Transverse colon (tissue), 4 donors: ENCODE measurements at regions of chr1 and their contacts with region 1.

Region 1: GRCh38 chr1:204363335-204364124 is 3.8 kb upstream of the PLEKHA6 start:
- DNase-seq: peak; percentile 75
- H3K4me3 ChIP-seq: peak overlapping the region; percentile 20 to 49 (median 30)
- H3K27ac ChIP-seq: peak overlapping the region; percentile 52 to 74 (median 66)
- H3K4me1 ChIP-seq: peaks cover 6 to 22% (median 14%) of the 10 kb centered on the region in 4 donors
- H3K27me3 ChIP-seq: no peaks in the 10 kb centered on the region
- CTCF ChIP-seq: peak; percentile 97 to 100 (median 98)
- EP300 ChIP-seq: no peak
- POLR2A ChIP-seq: peak; percentile 11

Region 2: GRCh38 chr1:203861379-203862184 is 501.9 kb before region 1 on chr1 and contains the start of gene SNRPE:
- in situ Hi-C with region 1: loop called in 3 of 4 experiments (anchors 25 kb)
- intact Hi-C with region 1: no loop called
- DNase-seq: peak; percentile 97
- H3K4me3 ChIP-seq: peak within 1 kb of the TSS; percentile 71 to 97 (median 80)
- H3K27ac ChIP-seq: peak within 1 kb of the TSS; percentile 72 to 89 (median 80)
- H3K4me1 ChIP-seq: peaks cover 13 to 27% (median 17%) of the 10 kb centered on the region in 4 donors
- H3K27me3 ChIP-seq: no peaks in the 10 kb centered on the region
- CTCF ChIP-seq: peak; percentile 85 to 98 (median 93)
- EP300 ChIP-seq: no peak
- POLR2A ChIP-seq: peak; percentile 52
- total RNA-seq, gene SNRPE: 3.0 to 30.2 (median 24.0) TPM in 3 of 4 donors, not detected in the other

Region 3: DNA sequence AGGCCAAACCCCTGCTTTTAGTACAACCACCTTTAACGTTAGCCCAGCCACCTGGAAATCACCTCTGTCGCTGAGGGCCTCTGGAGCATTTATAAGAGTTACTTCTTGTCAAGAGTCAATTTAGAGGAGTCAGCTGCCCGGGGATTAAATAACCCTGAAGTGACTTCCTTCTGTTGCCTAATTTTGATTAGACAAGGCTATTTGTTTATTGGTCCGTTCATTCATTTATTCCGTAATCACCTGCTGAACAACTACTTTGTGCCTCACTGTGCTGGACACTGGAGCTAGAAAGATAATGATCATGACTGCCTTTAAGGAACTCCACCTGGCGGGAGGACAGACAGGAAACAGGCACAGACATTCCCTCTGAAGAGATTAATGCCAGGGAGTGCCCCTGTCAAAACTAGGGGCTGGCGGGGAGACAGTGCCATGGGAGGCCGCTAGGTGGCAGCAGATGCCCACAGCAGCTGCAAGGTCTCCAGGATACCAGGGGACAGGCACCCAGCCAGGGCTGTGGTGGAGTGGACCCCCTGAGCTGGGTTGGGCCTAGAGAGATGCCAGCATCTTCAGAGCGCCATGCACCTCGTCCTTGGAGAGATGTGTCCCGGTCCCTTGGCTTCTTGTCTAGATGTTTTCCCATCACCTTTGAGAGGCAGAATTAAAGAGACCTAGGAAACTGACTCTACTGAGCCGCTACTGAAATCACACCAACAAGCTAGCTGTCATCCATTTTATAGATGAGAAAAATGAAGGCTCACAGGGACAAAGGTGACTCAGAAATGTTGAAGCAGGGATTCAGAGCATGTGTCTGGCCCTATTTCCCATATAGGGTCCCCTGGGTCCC is 201.1 kb before region 1 on chr1:
- in situ Hi-C with region 1: loop called (anchors 5 to 10 kb)
- intact Hi-C with region 1: loop called (anchors 2 kb)
- DNase-seq: peak; percentile 88
- H3K4me3 ChIP-seq: no peak overlapping the region
- H3K27ac ChIP-seq: no peak overlapping the region
- H3K4me1 ChIP-seq: peaks cover 0 to 5% (median 0%) of the 10 kb centered on the region in 4 donors
- H3K27me3 ChIP-seq: peaks cover 11% of the 10 kb centered on the region
- CTCF ChIP-seq: peak; percentile 98 to 100 (median 98)
- EP300 ChIP-seq: no peak
- POLR2A ChIP-seq: no peak

Region 4: DNA sequence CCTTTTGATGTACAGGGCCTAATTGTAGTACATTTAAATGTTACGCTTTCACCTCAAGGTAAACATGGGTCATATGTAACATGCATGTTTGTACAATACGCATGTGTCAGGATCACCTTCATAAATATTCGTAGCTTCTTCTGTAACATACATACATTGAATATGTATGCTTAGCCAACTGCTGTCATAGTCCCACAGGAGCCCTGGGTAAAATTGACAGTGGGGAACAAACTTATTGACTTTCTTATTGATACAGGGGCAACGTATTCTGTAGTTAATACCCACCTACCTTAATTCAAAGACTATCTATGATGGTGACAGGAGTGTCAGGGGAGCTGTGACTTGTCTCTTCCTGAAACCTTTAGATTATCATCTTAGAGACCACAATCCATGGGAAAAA is 193.7 kb before region 1 on chr1:
- in situ Hi-C with region 1: loop called (anchors 5 to 10 kb)
- intact Hi-C with region 1: no loop called
- DNase-seq: no peak
- H3K4me3 ChIP-seq: no peak overlapping the region
- H3K27ac ChIP-seq: no peak overlapping the region
- H3K4me1 ChIP-seq: no peaks in the 10 kb centered on the region
- H3K27me3 ChIP-seq: peaks cover 8% of the 10 kb centered on the region
- CTCF ChIP-seq: no peak
- EP300 ChIP-seq: no peak
- POLR2A ChIP-seq: no peak

Region 5: DNA sequence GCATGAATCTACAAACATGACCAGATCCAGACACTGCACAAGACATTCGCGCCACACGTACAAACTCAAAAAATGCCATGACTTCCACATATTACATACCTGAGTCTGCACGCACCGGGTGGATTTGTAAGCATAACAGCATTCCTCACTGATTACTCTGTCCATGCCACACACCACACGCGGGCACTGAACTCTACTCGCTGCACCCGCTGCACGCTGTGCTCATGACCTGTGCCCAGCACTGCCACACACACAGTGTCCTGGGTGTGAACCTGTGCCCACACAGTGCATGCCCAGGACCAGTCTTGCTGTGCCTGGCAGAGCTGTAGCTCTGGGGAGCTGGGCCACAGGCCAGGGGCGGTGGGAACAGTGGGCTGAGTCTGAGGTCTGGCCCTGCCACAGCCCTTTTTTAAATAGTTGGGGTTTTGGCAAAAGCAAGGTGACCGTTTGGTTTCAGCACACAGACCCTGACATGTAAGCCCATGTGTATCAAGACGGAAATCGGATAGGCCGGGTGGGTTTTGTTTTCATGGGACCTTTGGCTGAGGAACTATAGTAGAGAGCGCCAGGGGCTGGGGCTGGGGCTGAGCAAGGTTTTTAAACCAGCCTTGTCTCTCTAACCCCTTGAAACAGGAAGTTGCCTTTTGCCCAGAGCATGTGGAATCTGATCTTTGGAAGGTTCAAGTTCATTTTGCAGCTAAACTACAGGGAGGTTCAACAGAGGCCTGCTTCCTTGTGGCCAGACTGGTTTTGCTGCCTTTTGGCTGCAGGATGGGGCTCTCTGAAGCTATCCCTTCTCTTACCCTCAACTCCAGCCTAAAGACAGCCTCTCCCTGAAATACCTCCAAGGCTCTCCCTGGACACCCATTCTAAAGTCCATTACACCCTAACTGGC is 137.4 kb before region 1 on chr1:
- in situ Hi-C with region 1: loop called in 1 of 4 experiments (anchors 10 kb)
- intact Hi-C with region 1: no loop called
- DNase-seq: peak; percentile 67
- H3K4me3 ChIP-seq: no peak overlapping the region
- H3K27ac ChIP-seq: peak overlapping the region; percentile 52 to 74 (median 66)
- H3K4me1 ChIP-seq: peaks cover 0 to 14% (median 7%) of the 10 kb centered on the region in 4 donors
- H3K27me3 ChIP-seq: no peaks in the 10 kb centered on the region
- CTCF ChIP-seq: no peak
- EP300 ChIP-seq: no peak
- POLR2A ChIP-seq: no peak

Region 6: DNA sequence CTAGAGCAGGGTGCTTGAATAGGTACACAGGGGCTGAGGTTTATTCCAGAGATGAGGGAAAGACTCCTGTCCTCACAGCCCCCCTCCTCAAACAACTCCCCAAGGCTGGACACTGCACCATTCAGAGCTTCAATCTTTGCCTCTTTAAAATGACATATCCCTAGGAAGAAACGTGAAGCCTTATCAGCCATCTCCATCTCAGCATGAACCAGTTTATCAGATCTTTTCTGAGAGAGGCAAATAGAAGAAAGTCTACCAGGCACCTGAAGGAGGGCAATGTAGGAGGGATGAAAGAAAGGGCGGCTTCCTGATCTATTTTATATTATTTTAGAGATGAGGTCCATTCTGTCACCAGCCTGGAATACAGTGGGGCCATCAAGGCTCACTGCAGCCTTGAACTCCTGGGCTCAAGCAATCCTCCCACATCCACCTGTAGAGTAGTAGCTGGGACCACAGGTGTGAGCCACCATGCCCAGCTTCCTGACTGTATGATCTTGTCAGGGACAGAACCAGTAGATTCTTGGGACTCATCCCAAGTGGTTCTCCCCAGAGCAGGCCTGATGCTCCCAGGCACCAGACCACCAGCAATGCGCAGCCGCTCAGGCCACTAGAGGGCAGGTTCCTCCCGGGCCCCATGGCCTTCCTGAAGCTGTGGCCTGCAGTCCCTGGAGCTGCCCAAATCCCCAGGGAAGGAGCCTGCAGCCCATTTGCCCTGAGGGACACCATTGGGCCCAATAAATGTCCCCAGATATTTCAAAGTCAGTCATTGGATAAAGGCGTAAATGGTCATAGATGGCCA is 105.4 kb before region 1 on chr1:
- in situ Hi-C with region 1: loop called in 1 of 4 experiments (anchors 25 kb)
- intact Hi-C with region 1: no loop called
- DNase-seq: peak; percentile 57
- H3K4me3 ChIP-seq: no peak overlapping the region
- H3K27ac ChIP-seq: no peak overlapping the region
- H3K4me1 ChIP-seq: no peaks in the 10 kb centered on the region
- H3K27me3 ChIP-seq: no peaks in the 10 kb centered on the region
- CTCF ChIP-seq: peak; percentile 43 to 63 (median 57)
- EP300 ChIP-seq: no peak
- POLR2A ChIP-seq: no peak

Region 7: GRCh38 chr1:204266504-204267034 is 97.0 kb before region 1 on chr1:
- in situ Hi-C with region 1: loop called in 2 of 4 experiments (anchors 5 to 25 kb)
- intact Hi-C with region 1: no loop called
- DNase-seq: peak; percentile 64
- H3K4me3 ChIP-seq: no peak overlapping the region
- H3K27ac ChIP-seq: peak overlapping the region; percentile 46 to 72 (median 70)
- H3K4me1 ChIP-seq: peaks cover 13 to 26% (median 20%) of the 10 kb centered on the region in 4 donors
- H3K27me3 ChIP-seq: no peaks in the 10 kb centered on the region
- CTCF ChIP-seq: no peak
- EP300 ChIP-seq: no peak
- POLR2A ChIP-seq: no peak

Region 8: GRCh38 chr1:204408074-204408507 is 44.6 kb after region 1 on chr1:
- in situ Hi-C with region 1: no loop called
- intact Hi-C with region 1: no loop called
- DNase-seq: peak; percentile 73
- H3K4me3 ChIP-seq: peak overlapping the region; percentile 63 to 94 (median 82)
- H3K27ac ChIP-seq: peak overlapping the region; percentile 97 to 100 (median 100)
- H3K4me1 ChIP-seq: peaks cover 19 to 43% (median 36%) of the 10 kb centered on the region in 4 donors
- H3K27me3 ChIP-seq: no peaks in the 10 kb centered on the region
- CTCF ChIP-seq: no peak
- EP300 ChIP-seq: no peak
- POLR2A ChIP-seq: no peak